ENCODE measurements at regions of chr17 and their contacts with region 1.

Region 1: GRCh38 chr17:70137451-70138230 is 31.7 kb upstream of the KCNJ2 start:
- DNase-seq: peak; percentile 59
- H3K4me3 Mint-ChIP-seq: no peak overlapping the region
- H3K27ac Mint-ChIP-seq: no peak overlapping the region
- H3K4me1 Mint-ChIP-seq: peaks cover 18% of the 10 kb centered on the region
- H3K27me3 Mint-ChIP-seq: no peaks in the 10 kb centered on the region

Region 2: DNA sequence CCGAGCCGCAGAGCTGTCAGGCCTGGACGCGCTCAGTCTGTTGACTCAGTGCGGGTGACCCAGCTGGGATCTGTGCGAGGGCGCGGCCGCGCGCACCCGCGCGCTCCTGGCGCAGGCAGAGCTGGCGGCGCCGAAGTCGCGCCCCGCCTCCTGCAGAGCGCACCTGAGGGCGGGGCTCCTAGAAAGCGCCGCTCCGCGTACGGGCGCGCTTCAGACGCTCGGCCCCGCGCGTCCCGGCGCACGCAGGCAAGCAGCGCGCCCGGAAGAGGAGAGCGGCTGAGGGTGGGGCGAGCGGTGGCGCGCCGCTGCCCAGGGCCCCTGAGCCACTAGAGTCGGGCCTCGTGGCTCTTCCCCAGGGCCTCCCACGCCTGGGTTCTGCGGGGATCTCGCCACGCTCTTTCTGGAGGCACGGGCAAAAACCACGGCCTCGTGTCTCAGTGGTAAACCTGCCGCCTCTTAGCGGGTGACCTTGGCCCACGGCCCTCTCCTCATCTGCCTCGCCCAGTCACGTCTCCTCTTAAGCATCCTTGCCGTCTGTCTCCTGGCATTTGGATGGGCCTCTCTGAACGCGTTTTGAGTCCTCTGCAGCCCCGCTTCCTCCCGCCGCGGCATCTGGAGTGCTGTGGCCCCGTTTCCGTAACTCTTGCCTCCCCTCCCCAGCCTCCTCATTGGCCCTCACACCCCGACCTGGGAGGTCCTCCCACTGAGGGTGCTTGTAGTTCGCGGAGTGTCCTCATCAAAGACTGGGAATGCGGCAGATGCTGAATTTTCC is 810.4 kb before region 1 on chr17 and contains the start of gene ABCA5:
- CTCF ChIA-PET with region 1: no interaction called
- intact Hi-C with region 1: loop called (anchors 2 kb)
- DNase-seq: peak; percentile 92
- H3K4me3 Mint-ChIP-seq: peak within 1 kb of the TSS; percentile 93
- H3K27ac Mint-ChIP-seq: peak within 1 kb of the TSS; percentile 95
- H3K4me1 Mint-ChIP-seq: peaks cover 31% of the 10 kb centered on the region
- H3K27me3 Mint-ChIP-seq: peaks cover 2% of the 10 kb centered on the region
- total RNA-seq, gene ABCA5: 14.3 to 15.1 TPM

Region 3: GRCh38 chr17:70037498-70037897 is 100.1 kb before region 1 on chr17:
- CTCF ChIA-PET with region 1: no interaction called
- intact Hi-C with region 1: loop called (anchors 5 kb)
- DNase-seq: no peak
- H3K4me3 Mint-ChIP-seq: no peak overlapping the region
- H3K27ac Mint-ChIP-seq: no peak overlapping the region
- H3K4me1 Mint-ChIP-seq: no peaks in the 10 kb centered on the region
- H3K27me3 Mint-ChIP-seq: peaks cover 2% of the 10 kb centered on the region

Measured in activated naive CD4-positive, alpha-beta T cell treated with anti-CD3 and anti-CD28 coated beads for 36 hours (primary cell).